ENCODE measurements at regions of chr4 and their contacts with region 1.

Region 1: DNA sequence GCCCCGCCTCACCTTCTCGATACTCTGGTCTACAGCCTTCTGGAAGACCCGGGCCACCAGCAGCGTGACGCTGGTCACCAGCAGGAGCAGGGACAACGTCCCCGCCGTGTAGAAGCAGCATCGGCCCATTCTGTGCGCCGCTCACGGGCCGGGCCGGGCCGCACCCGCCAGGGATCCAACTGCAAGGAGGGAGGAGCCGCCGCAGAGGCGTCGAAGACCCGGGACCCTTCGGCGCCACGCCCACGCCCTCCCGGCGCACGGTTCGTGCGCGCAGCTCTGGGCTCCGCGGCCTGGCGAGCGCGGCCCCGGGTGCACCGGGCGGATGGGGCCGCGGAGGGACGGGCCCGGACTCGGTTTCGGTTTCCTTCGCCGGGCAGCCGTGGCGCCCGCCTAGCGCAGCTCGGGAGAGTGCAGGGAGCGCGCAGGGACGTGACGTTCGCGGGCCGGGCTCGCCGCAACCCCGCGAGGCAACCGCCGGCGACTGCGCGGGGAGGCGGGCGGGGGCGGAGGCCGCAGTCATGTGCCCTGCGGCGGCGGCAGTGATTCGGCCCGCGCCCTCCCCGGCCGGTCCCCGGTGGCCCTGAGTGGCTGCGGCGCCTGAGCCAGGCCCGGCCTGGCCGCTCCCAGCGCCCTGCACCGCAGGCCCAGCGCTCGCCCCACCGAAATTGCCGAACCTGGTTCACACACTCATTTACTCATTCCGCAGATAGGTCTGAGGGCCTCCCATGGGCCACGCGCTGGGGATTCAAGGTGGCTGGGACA is at the start of gene SCARB2:
- DNase-seq: peak; percentile 91
- ATAC-seq: peak; percentile 95 to 96
- total RNA-seq, gene SCARB2: 102 to 112 TPM

Region 2: DNA sequence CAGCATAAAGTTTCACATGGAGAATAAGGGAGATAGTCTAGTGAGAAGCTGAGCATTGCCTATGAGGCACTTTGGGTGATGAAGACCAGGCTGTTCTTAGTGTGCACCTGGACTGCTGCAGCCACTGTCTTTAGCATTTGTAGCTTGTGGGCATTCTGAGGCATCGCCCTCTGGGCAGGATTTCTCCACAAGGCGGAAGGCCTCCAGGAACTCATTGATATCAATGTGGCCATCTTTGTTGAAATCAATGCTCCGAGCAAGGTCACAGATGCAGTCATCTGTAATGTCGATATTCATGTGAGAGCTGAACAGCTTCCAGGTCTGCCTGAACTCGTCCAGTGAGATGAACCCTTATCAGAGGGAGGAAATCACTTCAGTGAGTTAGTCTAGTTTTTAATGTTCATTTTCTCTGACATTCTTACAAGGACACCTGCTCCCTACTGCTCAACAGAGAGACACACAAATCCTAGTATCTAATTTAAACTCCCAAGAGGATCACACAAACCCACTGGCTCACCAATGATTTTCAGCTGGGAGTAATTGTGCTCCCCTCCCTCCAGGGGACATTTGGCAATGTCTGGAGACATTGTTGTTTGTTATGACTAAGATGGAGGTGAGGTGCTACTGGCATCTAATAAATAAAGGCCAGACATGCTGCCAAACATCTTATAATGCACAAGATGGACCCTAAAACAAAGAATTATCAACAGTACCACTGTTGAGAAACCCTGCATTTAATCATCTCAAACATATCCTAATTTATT is 352.8 kb before region 1 on chr4:
- intact Hi-C with region 1: no loop called
- DNase-seq: no peak
- ATAC-seq: no peak

Region 3: DNA sequence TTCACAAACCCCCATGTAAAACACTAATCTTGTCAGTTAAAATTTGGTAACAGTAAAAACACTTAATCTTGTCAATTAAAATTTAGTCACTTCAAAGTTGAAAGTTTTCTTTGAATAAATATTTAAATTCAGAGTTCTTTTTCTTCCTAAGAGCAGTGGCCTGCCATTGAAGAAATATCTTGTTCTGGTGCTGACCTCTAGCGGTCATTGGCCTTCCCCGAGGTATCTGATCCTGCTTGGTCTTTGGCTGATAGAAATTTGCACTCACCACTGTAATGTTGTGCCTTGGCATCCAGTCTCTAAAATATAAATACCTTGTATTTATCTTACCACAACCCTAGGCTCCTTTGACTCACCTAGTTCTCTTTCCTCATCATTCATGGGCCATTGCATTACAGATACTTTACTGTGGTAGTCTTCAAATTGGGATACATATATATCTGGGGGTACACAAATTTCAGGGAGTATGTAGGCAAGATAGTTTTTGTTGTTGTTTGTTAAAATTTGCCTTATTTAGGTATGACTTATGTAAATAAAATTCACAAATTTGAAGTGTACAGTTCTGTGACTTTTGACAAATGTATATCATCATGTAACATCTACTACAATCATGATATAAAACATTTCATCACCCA is 145.8 kb before region 1 on chr4:
- intact Hi-C with region 1: no loop called
- DNase-seq: peak; percentile 75
- ATAC-seq: peak; percentile 70 to 85

Region 4: GRCh38 chr4:76148142-76148865 is 65.3 kb before region 1 on chr4 and contains the start of gene NUP54:
- intact Hi-C with region 1: loop called in 1 of 2 experiments (anchors 5 kb)
- DNase-seq: peak; percentile 95
- ATAC-seq: peak; percentile 99
- total RNA-seq, gene NUP54: 20.0 to 23.0 TPM